ENCODE measurements at regions of chr11 and their contacts with region 1.

Region 1: GRCh38 chr11:17389211-17389956 is 925 bp upstream of the KCNJ11 start:
- DNase-seq: peak; percentile 53 to 64
- H3K4me3 ChIP-seq: peak overlapping the region; percentile 82
- H3K27ac ChIP-seq: no peak overlapping the region
- H3K4me1 ChIP-seq: no peaks in the 10 kb centered on the region
- H3K27me3 ChIP-seq: peaks cover 8% of the 10 kb centered on the region
- CTCF ChIP-seq: peak; percentile 64

Region 2: GRCh38 chr11:17371614-17372013 is 17.8 kb before region 1 on chr11:
- CTCF ChIA-PET with region 1: interaction called, 17 read pairs
- POLR2A ChIA-PET with region 1: no interaction called
- intact Hi-C with region 1: no loop called
- DNase-seq: peak in 1 of 2 experiments; percentile 15
- H3K4me3 ChIP-seq: no peak overlapping the region
- H3K27ac ChIP-seq: no peak overlapping the region
- H3K4me1 ChIP-seq: no peaks in the 10 kb centered on the region
- H3K27me3 ChIP-seq: no peaks in the 10 kb centered on the region
- CTCF ChIP-seq: no peak

Region 3: GRCh38 chr11:17479284-17480214 is 90.2 kb after region 1 on chr11:
- CTCF ChIA-PET with region 1: no interaction called
- POLR2A ChIA-PET with region 1: no interaction called
- intact Hi-C with region 1: loop called (anchors 1 kb)
- DNase-seq: peak in 1 of 2 experiments; percentile 12
- H3K4me3 ChIP-seq: no peak overlapping the region
- H3K27ac ChIP-seq: no peak overlapping the region
- H3K4me1 ChIP-seq: no peaks in the 10 kb centered on the region
- H3K27me3 ChIP-seq: peaks cover 54% of the 10 kb centered on the region
- CTCF ChIP-seq: no peak

Region 4: GRCh38 chr11:17593466-17594245 is 204.3 kb after region 1 on chr11:
- CTCF ChIA-PET with region 1: no interaction called
- POLR2A ChIA-PET with region 1: no interaction called
- intact Hi-C with region 1: no loop called
- DNase-seq: no peak
- H3K4me3 ChIP-seq: no peak overlapping the region
- H3K27ac ChIP-seq: no peak overlapping the region
- H3K4me1 ChIP-seq: no peaks in the 10 kb centered on the region
- H3K27me3 ChIP-seq: peaks cover 72% of the 10 kb centered on the region
- CTCF ChIP-seq: no peak